Right lobe of liver (tissue), 6 donors: ENCODE measurements at regions of chr12 and their contacts with region 1.

Region 1: GRCh38 chr12:121894633-121895032 is 6.0 kb downstream of the PSMD9 start:
- DNase-seq: no peak
- ATAC-seq: peak; percentile 33 to 62 (median 55)
- H3K4me3 ChIP-seq: no peak overlapping the region
- H3K27ac ChIP-seq: no peak overlapping the region
- H3K4me1 ChIP-seq: peaks cover 0 to 19% (median 5%) of the 10 kb centered on the region in 4 donors
- H3K27me3 ChIP-seq: no peaks in the 10 kb centered on the region
- CTCF ChIP-seq: peak in 3 of 4 donors; percentile 6 to 22 (median 14)
- POLR2A ChIP-seq: no peak

Region 2: DNA sequence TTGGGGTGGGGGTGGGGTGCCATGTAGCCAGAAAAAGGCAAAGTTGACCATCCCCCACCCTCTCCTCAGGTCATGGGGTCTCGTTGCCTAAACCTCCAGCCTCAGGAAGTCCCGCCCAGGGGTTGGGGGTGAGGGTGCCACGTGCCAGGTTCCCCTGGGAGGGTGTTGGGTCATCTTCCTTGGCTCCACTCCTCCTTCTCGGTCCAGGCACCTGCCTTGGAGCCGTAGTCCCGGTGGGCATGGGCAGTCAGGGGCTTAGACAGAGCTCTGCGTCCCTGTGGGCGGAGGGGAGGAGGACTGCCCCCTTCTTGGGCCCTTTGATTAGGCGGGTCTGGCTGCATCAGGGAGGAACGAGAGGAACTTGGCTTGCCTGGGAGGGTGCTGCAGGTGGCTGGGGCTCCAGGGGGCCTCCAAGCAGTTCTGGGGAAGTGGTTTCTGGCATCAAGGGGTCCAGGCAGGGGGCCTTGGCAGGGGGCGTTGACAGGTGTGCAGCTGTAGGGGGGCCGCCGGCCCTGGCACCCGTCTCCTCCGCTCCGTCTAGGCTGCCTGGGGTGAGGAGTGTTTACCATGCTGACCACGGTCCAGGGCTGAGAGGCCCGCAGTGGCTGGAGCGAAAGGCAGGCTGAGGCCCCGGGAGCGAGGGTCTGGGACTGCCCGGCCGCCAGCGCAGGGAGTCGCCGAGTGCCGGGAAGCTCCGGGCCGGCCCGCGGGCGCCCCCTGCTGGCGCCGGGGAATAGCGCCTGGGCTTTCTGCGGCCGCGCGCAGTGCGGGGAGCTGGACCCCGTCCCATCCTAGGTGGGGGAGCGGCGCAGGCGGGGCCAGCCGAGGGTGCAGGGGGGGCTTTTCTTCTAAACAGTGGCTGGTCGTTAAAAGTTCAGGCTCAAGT is 83.0 kb before region 1 on chr12:
- intact Hi-C with region 1: loop called (anchors 10 kb)
- DNase-seq: peak; percentile 79 to 85 (median 81)
- ATAC-seq: peak; percentile 76 to 89 (median 83)
- H3K4me3 ChIP-seq: peak overlapping the region; percentile 57 to 75 (median 69)
- H3K27ac ChIP-seq: peak overlapping the region in 2 of 3 donors; percentile 59 to 67
- H3K4me1 ChIP-seq: peaks cover 0 to 46% (median 20%) of the 10 kb centered on the region in 4 donors
- H3K27me3 ChIP-seq: no peaks in the 10 kb centered on the region
- CTCF ChIP-seq: peak; percentile 98 to 100 (median 100)
- POLR2A ChIP-seq: no peak

Region 3: GRCh38 chr12:121858662-121859572 is 35.7 kb before region 1 on chr12 and contains the start of gene HPD:
- intact Hi-C with region 1: no loop called
- DNase-seq: peak; percentile 91 to 98 (median 97)
- ATAC-seq: peak; percentile 79 to 88 (median 84)
- H3K4me3 ChIP-seq: peak within 1 kb of the TSS; percentile 39 to 62 (median 61)
- H3K27ac ChIP-seq: peak within 1 kb of the TSS; percentile 89 to 98 (median 91)
- H3K4me1 ChIP-seq: peaks cover 0 to 52% (median 12%) of the 10 kb centered on the region in 4 donors
- H3K27me3 ChIP-seq: no peaks in the 10 kb centered on the region
- CTCF ChIP-seq: peak in 1 of 4 donors; percentile 7
- POLR2A ChIP-seq: peak; percentile 69
- total RNA-seq, gene HPD: 649 to 1,803 (median 1,080) TPM

Region 4: GRCh38 chr12:121955258-121956235 is 60.9 kb after region 1 on chr12:
- intact Hi-C with region 1: no loop called
- DNase-seq: no peak
- ATAC-seq: peak in 3 of 4 donors; percentile 48 to 56 (median 52)
- H3K4me3 ChIP-seq: no peak overlapping the region
- H3K27ac ChIP-seq: no peak overlapping the region
- H3K4me1 ChIP-seq: no peaks in the 10 kb centered on the region
- H3K27me3 ChIP-seq: no peaks in the 10 kb centered on the region
- CTCF ChIP-seq: peak; percentile 35 to 45 (median 40)
- POLR2A ChIP-seq: no peak